RWPE1 (cell line): ENCODE measurements at regions of chr9 and their contacts with region 1.

Region 1: GRCh38 chr9:128438343-128439109 is 17.3 kb upstream of the ODF2 start:
- DNase-seq: peak; percentile 90
- H3K27ac ChIP-seq: peak overlapping the region; percentile 37
- CTCF ChIP-seq: peak; percentile 100

Region 2: GRCh38 chr9:128420060-128420650 is 18.4 kb before region 1 on chr9:
- CTCF ChIA-PET with region 1: interaction called, 18 read pairs
- POLR2A ChIA-PET with region 1: no interaction called
- DNase-seq: peak; percentile 87
- H3K27ac ChIP-seq: peak overlapping the region; percentile 80
- CTCF ChIP-seq: peak; percentile 99

Region 3: GRCh38 chr9:128459011-128459410 is 20.5 kb after region 1 on chr9:
- CTCF ChIA-PET with region 1: interaction called, 10 read pairs
- POLR2A ChIA-PET with region 1: no interaction called
- DNase-seq: no peak
- H3K27ac ChIP-seq: peak overlapping the region; percentile 12
- CTCF ChIP-seq: no peak